ENCODE measurements at regions of chr2 and their contacts with region 1.

Region 1: GRCh38 chr2:18520451-18521425 is 39.7 kb downstream of the RDH14 start:
- DNase-seq: peak; percentile 44 to 85 (median 76)
- ATAC-seq: peak; percentile 65
- H3K4me3 ChIP-seq: no peak overlapping the region
- H3K4me3 Mint-ChIP-seq: no peak overlapping the region
- H3K27ac ChIP-seq: no peak overlapping the region
- H3K27ac Mint-ChIP-seq: no peak overlapping the region
- H3K4me1 ChIP-seq: no peaks in the 10 kb centered on the region
- H3K4me1 Mint-ChIP-seq: no peaks in the 10 kb centered on the region
- H3K27me3 ChIP-seq: no peaks in the 10 kb centered on the region
- H3K27me3 Mint-ChIP-seq: peaks cover 26% of the 10 kb centered on the region
- CTCF ChIP-seq: peak; percentile 87

Region 2: DNA sequence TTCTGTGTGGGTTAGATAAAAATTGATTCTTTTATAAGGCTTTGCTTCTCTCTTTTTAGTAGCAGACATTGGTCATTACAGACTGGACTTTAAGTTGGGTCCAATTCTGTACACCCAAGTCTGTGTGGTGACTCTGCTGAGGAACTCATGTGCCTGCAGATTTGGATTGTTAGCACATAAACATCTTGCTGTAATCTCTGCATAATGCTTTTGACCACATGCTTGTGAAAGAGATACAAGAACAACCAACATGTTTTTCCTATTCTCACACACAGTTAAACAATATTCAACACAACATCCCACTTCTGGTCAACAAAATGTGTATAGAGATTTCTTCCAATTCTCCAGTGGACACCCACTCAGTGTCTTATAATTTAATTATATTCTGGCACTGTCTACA is 230.4 kb before region 1 on chr2:
- CTCF ChIA-PET with region 1: no interaction called
- POLR2A ChIA-PET with region 1: no interaction called
- intact Hi-C with region 1: no loop called
- DNase-seq: no peak
- ATAC-seq: no peak
- H3K4me3 ChIP-seq: no peak overlapping the region
- H3K4me3 Mint-ChIP-seq: no peak overlapping the region
- H3K27ac ChIP-seq: no peak overlapping the region
- H3K27ac Mint-ChIP-seq: no peak overlapping the region
- H3K4me1 ChIP-seq: no peaks in the 10 kb centered on the region
- H3K4me1 Mint-ChIP-seq: no peaks in the 10 kb centered on the region
- H3K27me3 ChIP-seq: peaks cover 0 to 2% of the 10 kb centered on the region in 2 experiments
- H3K27me3 Mint-ChIP-seq: no peaks in the 10 kb centered on the region
- CTCF ChIP-seq: no peak

Region 3: DNA sequence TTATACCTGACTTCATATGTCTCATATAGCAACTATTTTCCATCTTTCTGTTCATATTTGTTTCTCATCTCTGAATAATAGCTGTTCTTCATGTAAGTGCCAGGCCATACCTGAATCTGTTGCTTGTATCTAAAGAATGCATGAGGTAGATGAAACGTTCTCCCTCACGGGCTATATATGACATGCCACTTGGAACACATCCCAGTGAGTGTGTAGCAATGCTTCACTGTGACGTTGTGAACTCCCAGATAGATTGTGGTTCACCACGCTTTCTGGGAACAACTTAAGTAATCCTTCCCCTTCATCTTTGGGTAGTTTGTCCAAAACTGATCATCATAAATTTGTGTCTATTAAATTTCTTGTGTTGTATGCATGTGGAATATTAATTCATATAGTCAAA is 20.4 kb before region 1 on chr2:
- CTCF ChIA-PET with region 1: interaction called, 11 read pairs
- POLR2A ChIA-PET with region 1: no interaction called
- intact Hi-C with region 1: no loop called
- DNase-seq: no peak
- ATAC-seq: no peak
- H3K4me3 ChIP-seq: no peak overlapping the region
- H3K4me3 Mint-ChIP-seq: no peak overlapping the region
- H3K27ac ChIP-seq: no peak overlapping the region
- H3K27ac Mint-ChIP-seq: no peak overlapping the region
- H3K4me1 ChIP-seq: no peaks in the 10 kb centered on the region
- H3K4me1 Mint-ChIP-seq: no peaks in the 10 kb centered on the region
- H3K27me3 ChIP-seq: no peaks in the 10 kb centered on the region
- H3K27me3 Mint-ChIP-seq: peaks cover 28% of the 10 kb centered on the region
- CTCF ChIP-seq: no peak

Region 4: DNA sequence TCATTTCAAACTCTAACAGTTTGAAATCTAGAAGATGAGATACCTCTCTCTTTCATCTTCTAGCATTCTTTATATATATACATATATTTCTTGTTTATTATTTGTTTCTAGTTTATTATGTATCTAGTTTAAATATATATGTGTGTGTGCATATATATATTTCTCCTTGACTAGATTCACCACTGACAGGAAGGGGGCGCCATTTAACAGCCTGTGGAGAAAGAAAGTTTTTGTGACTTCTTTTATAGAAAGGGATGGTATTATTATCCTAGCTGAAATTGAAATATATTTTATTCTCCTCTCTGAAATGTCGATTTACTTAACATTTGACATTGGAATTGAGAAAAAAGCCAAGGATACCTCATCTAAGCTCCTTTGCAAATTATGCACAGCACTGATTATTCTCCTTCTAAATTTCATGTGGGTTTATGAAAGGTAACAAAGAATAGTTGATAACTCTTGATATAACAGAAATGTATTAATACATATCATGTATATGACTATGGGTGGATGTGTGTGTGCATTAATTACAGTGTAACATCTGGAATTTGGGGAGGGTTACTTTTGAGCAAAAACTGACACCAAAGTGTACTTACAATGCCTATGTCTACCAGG is 229.3 kb after region 1 on chr2:
- CTCF ChIA-PET with region 1: interaction called, 4 read pairs
- POLR2A ChIA-PET with region 1: no interaction called
- intact Hi-C with region 1: loop called (anchors 1 to 10 kb)
- DNase-seq: peak in 5 of 9 experiments; percentile 4 to 45 (median 24)
- ATAC-seq: no peak
- H3K4me3 ChIP-seq: no peak overlapping the region
- H3K4me3 Mint-ChIP-seq: no peak overlapping the region
- H3K27ac ChIP-seq: no peak overlapping the region
- H3K27ac Mint-ChIP-seq: no peak overlapping the region
- H3K4me1 ChIP-seq: no peaks in the 10 kb centered on the region
- H3K4me1 Mint-ChIP-seq: no peaks in the 10 kb centered on the region
- H3K27me3 ChIP-seq: no peaks in the 10 kb centered on the region
- H3K27me3 Mint-ChIP-seq: no peaks in the 10 kb centered on the region
- CTCF ChIP-seq: peak; percentile 37

Region 5: GRCh38 chr2:19377717-19378116 is 857.0 kb after region 1 on chr2:
- CTCF ChIA-PET with region 1: interaction called, 7 read pairs
- POLR2A ChIA-PET with region 1: no interaction called
- intact Hi-C with region 1: loop called in 1 of 2 experiments (anchors 2 kb)
- DNase-seq: peak in 2 of 9 experiments; percentile 12 to 28
- ATAC-seq: no peak
- H3K4me3 ChIP-seq: no peak overlapping the region
- H3K4me3 Mint-ChIP-seq: no peak overlapping the region
- H3K27ac ChIP-seq: no peak overlapping the region
- H3K27ac Mint-ChIP-seq: no peak overlapping the region
- H3K4me1 ChIP-seq: no peaks in the 10 kb centered on the region
- H3K4me1 Mint-ChIP-seq: no peaks in the 10 kb centered on the region
- H3K27me3 ChIP-seq: peaks cover 0 to 6% of the 10 kb centered on the region in 2 experiments
- H3K27me3 Mint-ChIP-seq: peaks cover 29% of the 10 kb centered on the region
- CTCF ChIP-seq: peak; percentile 23

Region 6: GRCh38 chr2:19863303-19864041 is 1342.7 kb after region 1 on chr2:
- CTCF ChIA-PET with region 1: interaction called, 102 read pairs
- POLR2A ChIA-PET with region 1: no interaction called
- intact Hi-C with region 1: loop called in 1 of 2 experiments (anchors 1 kb)
- DNase-seq: peak; percentile 51 to 84 (median 70)
- ATAC-seq: peak; percentile 91
- H3K4me3 ChIP-seq: peak overlapping the region in 1 of 2 experiments; percentile 28
- H3K4me3 Mint-ChIP-seq: no peak overlapping the region
- H3K27ac ChIP-seq: no peak overlapping the region
- H3K27ac Mint-ChIP-seq: no peak overlapping the region
- H3K4me1 ChIP-seq: peaks cover 10% of the 10 kb centered on the region
- H3K4me1 Mint-ChIP-seq: peaks cover 9% of the 10 kb centered on the region
- H3K27me3 ChIP-seq: peaks cover 0 to 3% of the 10 kb centered on the region in 2 experiments
- H3K27me3 Mint-ChIP-seq: peaks cover 2% of the 10 kb centered on the region
- CTCF ChIP-seq: peak; percentile 98